ENCODE measurements at regions of chr15 and their contacts with region 1.

Region 1: DNA sequence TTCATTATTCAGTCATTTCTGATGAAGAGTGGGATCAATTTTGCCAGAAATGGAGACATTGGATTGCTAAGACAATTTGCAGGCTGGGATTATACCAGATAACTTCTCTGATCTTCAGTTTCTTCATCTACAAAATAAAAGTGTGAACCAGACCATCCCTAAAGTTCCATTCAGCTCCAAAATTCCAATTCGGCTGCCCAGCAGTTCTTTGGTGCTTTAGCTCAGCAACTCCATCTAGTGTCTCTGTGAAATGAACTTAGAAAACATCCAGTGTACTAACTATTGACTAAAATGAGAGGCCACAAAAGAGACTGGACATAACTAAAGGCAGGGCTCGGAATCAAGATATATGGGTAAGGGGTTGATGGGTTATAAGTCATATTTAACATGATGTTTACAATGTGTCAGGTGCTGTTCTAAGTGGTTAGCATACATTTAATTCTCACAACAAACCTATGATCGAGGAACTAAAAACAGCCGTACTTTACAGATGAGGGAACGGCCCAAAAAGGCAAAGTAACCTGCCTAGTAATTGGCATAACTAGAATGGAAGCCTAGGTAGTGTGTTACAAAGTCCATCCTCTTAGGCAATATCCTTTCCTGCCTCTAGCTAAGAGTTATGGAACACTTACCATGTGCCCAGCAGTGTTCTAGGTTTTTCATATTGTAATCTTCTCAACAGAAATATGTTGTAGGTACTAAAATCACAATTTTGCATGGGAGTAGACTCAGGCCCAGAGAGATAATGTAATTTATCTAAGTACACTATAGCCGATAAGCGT is 17.0 kb downstream of the THAP10 start:
- DNase-seq: no peak
- ATAC-seq: peak; percentile 41; the same call in 1 of the 3 replicates
- H3K4me3 ChIP-seq: no peak overlapping the region
- H3K27ac ChIP-seq: no peak overlapping the region
- H3K4me1 ChIP-seq: peaks cover 26% of the 10 kb centered on the region
- H3K27me3 ChIP-seq: no peaks in the 10 kb centered on the region
- CTCF ChIP-seq: peak; percentile 61
- EP300 ChIP-seq: no peak
- POLR2A ChIP-seq: no peak
- RAD21 ChIP-seq: no peak

Region 2: GRCh38 chr15:70826634-70827033 is 48.6 kb before region 1 on chr15:
- CTCF ChIA-PET with region 1: interaction called, 10 read pairs
- POLR2A ChIA-PET with region 1: no interaction called
- in situ Hi-C with region 1: loop called (anchors 10 kb)
- intact Hi-C with region 1: loop called (anchors 1 kb)
- DNase-seq: peak; percentile 27
- ATAC-seq: no peak
- H3K4me3 ChIP-seq: no peak overlapping the region
- H3K27ac ChIP-seq: no peak overlapping the region
- H3K4me1 ChIP-seq: peaks cover 17% of the 10 kb centered on the region; the same call in 1 of the 2 replicates
- H3K27me3 ChIP-seq: no peaks in the 10 kb centered on the region
- CTCF ChIP-seq: no peak
- EP300 ChIP-seq: no peak
- POLR2A ChIP-seq: no peak
- RAD21 ChIP-seq: no peak

Region 3: GRCh38 chr15:71043361-71043760 is 168.2 kb after region 1 on chr15:
- CTCF ChIA-PET with region 1: no interaction called
- POLR2A ChIA-PET with region 1: no interaction called
- in situ Hi-C with region 1: no loop called
- intact Hi-C with region 1: no loop called
- DNase-seq: no peak
- ATAC-seq: no peak
- H3K4me3 ChIP-seq: no peak overlapping the region
- H3K27ac ChIP-seq: no peak overlapping the region
- H3K4me1 ChIP-seq: no peaks in the 10 kb centered on the region
- H3K27me3 ChIP-seq: no peaks in the 10 kb centered on the region
- CTCF ChIP-seq: no peak
- EP300 ChIP-seq: no peak
- POLR2A ChIP-seq: no peak
- RAD21 ChIP-seq: no peak

Measured in HepG2 (cell line).